AG04450 (cell line): ENCODE measurements at regions of chr3 and their contacts with region 1.

Region 1: DNA sequence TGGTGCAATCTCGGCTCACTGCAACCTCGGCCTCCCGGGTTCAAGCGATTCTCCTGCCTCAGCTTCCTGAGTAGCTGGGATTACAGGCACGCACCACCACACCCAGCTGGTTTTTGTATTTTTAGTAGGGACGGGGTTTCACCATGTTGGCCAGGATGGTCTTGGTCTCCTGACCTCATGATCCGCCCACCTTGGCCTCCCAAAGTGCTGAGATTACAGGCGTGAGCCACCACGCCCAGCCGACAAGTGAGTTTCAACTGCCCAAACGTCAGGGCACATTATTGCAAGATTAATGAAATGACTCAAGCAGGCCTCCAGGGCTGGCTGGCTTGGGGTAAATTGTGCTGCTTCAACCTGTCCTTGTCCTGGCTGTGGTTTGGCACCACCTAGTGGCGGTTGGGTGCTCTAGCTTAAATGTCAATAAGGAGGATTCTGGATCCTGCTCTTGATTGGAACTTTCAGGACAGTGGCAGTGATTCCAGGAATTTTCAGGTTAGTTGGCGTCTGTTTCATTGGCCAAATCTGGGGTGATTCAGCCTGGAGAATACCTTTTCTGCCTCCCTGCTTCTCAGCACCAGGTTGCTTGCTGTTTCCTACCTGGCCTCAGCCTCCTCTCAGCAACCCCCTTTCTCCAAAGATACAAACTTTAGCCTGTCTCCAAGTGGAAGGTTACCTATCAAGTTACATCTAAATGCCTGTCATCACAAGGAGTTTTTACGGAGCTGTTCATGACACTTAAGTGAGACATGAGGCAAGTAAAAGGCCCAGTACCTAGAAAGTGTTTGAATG is 32.4 kb upstream of the SACM1L start:
- DNase-seq: peak; percentile 81
- H3K4me3 ChIP-seq: no peak overlapping the region
- H3K27ac ChIP-seq: no peak overlapping the region
- H3K27me3 ChIP-seq: no peaks in the 10 kb centered on the region
- CTCF ChIP-seq: peak; percentile 94

Region 2: GRCh38 chr3:45479621-45480035 is 177.1 kb before region 1 on chr3:
- CTCF ChIA-PET with region 1: interaction called, 11 read pairs
- POLR2A ChIA-PET with region 1: no interaction called
- DNase-seq: peak; percentile 36
- H3K4me3 ChIP-seq: no peak overlapping the region
- H3K27ac ChIP-seq: peak overlapping the region; percentile 62
- H3K27me3 ChIP-seq: no peaks in the 10 kb centered on the region
- CTCF ChIP-seq: no peak

Region 3: DNA sequence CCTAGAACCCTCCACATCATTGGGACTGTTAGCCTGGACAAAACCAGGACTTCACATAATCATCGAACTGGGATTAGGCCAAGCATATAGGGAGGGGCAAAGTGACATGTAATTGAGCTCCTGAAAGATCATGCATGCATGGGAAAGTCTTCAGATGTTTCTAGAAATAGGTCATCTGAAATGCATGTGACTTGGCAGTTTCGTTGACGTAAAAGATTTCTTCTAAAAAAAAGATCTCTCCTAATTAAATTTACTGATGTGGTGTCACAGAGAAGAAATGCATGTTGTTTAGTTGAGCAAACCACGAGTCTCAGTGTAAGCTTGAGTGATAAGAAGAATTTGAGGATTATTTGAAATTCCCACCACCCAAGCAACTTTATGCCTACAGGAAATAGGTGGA is 132.2 kb before region 1 on chr3:
- CTCF ChIA-PET with region 1: interaction called, 21 read pairs
- POLR2A ChIA-PET with region 1: no interaction called
- DNase-seq: no peak
- H3K4me3 ChIP-seq: no peak overlapping the region
- H3K27ac ChIP-seq: no peak overlapping the region
- H3K27me3 ChIP-seq: no peaks in the 10 kb centered on the region
- CTCF ChIP-seq: no peak

Region 4: DNA sequence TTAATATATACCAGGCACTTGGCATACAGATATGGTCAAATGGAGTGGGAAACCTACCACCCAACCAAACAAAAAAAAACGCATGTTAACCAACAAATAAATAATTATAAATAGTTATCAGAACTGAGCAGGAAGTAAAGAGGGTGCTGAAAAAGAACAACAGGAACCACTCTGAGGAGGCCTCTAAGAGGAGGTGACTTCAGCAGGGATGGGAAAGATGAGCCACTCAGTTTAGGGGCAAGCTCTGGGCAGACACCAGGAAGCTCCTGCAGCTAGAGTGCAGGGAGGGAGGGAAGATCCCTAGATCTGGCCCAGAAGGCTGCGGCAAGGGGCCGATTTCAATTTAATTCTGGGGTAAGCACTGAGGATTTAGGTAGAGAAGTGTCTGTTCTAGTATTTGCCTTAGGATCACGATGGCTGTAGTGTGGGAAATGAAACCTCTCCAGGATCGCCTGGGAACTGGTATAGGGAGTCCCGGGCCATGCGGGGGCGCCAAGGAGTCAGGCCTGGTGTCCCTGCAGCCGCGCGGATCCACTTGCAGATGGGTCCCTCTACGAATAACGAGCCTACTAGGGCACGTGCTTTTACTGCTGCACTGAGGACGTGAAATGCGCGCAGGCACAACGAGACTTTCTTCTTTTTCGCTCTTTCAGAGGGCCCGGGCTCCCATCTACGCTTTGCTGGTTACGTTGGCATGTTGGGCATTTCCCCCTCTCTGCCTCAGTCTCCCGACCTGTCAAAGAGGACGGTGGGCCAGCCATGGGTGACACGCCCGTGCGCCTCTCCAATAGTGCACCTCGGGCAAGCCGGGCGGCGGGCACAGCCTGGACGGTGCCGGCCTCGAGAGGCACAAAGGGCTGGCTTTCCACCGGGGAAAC is 63.7 kb before region 1 on chr3:
- CTCF ChIA-PET with region 1: interaction called, 14 read pairs
- POLR2A ChIA-PET with region 1: interaction called, 4 read pairs
- DNase-seq: peak; percentile 63
- H3K4me3 ChIP-seq: peak overlapping the region; percentile 72
- H3K27ac ChIP-seq: peak overlapping the region; percentile 70
- H3K27me3 ChIP-seq: no peaks in the 10 kb centered on the region
- CTCF ChIP-seq: peak; percentile 86

Region 5: DNA sequence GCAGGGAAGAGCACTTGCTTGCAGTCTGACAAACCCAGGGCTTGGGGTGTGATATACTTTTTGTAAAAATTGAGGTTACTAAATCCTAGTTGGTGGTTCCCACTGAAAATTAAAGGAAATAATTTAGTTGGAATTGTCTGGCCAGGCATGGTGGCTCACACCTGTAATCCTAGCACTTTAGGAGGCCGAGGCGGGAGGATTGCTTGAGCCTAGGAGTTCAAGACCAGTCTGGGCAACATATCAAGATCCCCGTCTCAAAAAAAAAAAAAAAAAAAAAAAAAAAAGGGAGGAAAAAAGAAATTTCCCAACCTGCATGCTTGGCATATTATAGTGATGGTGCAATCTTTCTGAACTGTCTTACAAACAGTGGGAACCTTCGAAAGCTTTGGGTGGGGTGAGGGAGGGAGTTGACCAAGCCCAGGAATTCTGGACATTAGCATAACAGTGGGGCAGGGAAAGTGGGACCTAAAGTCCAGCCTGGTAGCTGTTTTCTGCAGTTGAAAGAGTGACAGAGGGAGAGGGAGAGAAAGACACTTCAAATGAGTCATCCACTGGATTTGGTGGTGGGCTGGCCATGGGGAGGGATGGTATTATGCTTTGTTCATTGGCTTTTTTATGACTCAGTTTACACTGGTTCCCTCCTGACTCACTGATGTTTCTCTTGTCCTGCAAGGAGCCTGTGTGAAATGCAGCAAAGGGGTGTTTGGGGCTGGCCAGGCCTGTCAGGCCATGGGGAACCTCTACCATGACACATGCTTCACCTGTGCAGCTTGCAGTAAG is 21.1 kb before region 1 on chr3:
- CTCF ChIA-PET with region 1: interaction called, 13 read pairs
- POLR2A ChIA-PET with region 1: interaction called, 5 read pairs
- DNase-seq: peak; percentile 52
- H3K4me3 ChIP-seq: no peak overlapping the region
- H3K27ac ChIP-seq: peak overlapping the region; percentile 66
- H3K27me3 ChIP-seq: no peaks in the 10 kb centered on the region
- CTCF ChIP-seq: no peak

Region 6: DNA sequence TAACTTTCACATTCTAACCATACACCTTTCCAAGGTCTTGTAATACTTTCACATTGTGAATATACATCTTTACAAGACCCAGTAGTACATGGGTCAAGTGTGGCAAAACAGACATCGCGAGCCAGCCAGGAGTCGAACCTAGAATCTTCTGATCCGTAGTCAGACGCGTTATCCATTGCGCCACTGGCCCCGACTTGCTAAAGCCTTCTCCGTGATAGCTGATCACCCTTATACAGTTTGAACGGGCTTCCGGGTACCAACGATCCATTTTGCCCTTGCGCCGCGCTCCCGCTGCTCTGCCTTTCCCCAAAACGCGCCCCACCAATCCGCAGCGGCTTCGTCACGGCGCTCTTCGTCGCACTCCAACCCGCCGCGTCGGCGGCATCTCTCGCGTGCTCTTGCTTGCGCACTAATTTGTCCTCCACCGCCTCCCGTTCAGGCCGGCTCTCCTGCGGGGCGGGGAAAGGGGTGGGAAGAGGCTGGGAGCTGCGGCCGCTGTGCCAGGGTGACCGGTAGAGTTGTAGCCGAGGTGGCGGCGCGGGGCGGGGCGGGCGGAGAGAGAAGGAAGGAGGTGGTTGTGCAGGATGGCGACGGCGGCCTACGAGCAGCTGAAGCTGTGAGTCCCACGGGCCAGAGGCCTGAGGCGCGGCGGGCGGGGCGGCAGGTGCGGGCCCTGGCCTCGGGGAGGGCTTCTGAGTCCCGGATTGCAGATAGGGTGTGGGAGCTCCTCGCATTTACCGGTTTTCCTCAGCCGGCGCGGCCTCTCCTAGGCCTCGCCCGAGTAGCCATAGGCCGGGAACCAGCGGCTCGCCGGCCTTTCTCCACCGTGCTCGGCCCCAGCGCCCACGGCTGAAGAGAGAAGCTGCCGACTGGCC is 32.4 kb after region 1 on chr3 and contains the start of gene SACM1L:
- CTCF ChIA-PET with region 1: interaction called, 27 read pairs
- POLR2A ChIA-PET with region 1: interaction called, 20 read pairs
- DNase-seq: peak; percentile 97
- H3K4me3 ChIP-seq: peak within 1 kb of the TSS; percentile 66
- H3K27ac ChIP-seq: peak within 1 kb of the TSS; percentile 85
- H3K27me3 ChIP-seq: no peaks in the 10 kb centered on the region
- CTCF ChIP-seq: no peak
- polyA plus RNA-seq, gene SACM1L: 26.4 and 35.5 TPM in 2 replicates

Region 7: GRCh38 chr3:45950686-45951600 is 294.2 kb after region 1 on chr3:
- CTCF ChIA-PET with region 1: no interaction called
- POLR2A ChIA-PET with region 1: no interaction called
- DNase-seq: no peak
- H3K4me3 ChIP-seq: no peak overlapping the region
- H3K27ac ChIP-seq: no peak overlapping the region
- H3K27me3 ChIP-seq: no peaks in the 10 kb centered on the region
- CTCF ChIP-seq: no peak

Region 8: DNA sequence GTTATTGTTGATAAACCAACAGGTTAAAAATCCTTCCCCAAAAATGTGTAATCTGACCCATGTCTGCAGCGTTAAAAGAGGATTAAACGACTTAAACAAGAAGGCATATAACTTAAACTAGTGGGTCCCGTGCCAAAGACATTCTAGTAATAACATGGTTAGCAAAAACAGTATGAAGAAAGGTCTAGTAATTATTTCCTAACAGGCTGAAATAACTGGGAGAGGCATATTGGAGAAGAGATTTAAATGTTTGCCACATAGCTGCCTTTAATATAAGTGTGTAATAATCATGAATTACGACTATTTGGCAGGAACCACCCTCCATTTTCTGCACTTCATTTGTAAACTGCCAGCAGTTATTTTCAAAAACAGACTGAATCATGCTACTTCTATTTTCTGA is 1989.6 kb after region 1 on chr3:
- CTCF ChIA-PET with region 1: no interaction called
- POLR2A ChIA-PET with region 1: no interaction called
- DNase-seq: peak; percentile 32
- H3K4me3 ChIP-seq: no peak overlapping the region
- H3K27ac ChIP-seq: no peak overlapping the region
- H3K27me3 ChIP-seq: no peaks in the 10 kb centered on the region
- CTCF ChIP-seq: no peak